Activated CD4-positive, alpha-beta T cell treated with anti-CD3 and anti-CD28 coated beads for 36 hours (primary cell): ENCODE measurements at regions of chrX and their contacts with region 1.

Region 1: DNA sequence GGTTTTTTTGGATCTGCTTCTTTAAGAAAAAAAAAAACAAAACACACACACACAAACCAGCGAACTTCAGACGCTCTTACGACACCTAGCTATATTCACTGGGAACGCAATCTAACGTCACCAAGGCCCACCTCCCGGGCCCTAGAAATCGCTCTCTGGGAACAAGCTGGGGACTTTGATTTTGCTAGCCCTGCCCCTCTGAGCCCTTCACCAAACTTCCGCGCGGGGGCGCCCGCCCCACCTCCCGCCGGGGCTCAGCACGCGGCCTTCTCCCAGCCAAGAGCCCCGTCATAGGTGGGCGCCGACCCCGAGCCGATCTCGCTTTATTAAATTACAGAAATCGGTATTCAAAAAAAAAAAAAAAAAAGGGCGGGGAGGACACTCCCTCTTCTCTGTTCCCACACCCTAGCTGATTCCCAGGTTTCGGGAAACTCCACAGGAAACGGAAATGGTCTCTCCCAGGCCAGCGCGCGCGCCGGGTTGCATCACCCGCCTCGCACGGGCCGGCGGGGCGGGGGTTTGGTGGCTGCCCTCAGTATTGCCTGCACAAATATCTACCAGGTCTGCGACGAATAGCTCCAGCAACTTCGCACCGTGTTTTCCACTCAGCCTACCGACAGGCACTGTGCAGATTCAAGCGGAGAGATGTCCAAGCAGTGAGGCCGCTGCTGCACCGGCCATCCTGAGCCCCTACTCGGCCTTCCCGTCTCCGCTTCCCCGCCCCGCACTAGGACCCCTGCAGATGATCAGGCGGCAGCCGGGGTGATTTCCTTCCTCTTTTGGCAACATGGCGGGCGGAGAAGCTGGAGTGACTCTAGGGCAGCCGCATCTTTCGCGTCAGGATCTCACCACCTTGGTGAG is at the start of gene EIF2S3:
- DNase-seq: peak; percentile 89
- ATAC-seq: peak; percentile 89
- H3K4me3 Mint-ChIP-seq: no peak within 1 kb of the TSS
- H3K27ac Mint-ChIP-seq: no peak within 1 kb of the TSS
- H3K4me1 Mint-ChIP-seq: peaks cover 7% of the 10 kb centered on the region
- H3K27me3 Mint-ChIP-seq: no peaks in the 10 kb centered on the region
- total RNA-seq, gene EIF2S3: 316 to 336 TPM

Region 2: GRCh38 chrX:23742697-23743622 is 311.5 kb before region 1 on chrX and contains the start of gene ACOT9:
- CTCF ChIA-PET with region 1: no interaction called
- POLR2A ChIA-PET with region 1: no interaction called
- intact Hi-C with region 1: loop called in 1 of 2 experiments (anchors 1 kb)
- DNase-seq: peak; percentile 84
- ATAC-seq: peak; percentile 96
- H3K4me3 Mint-ChIP-seq: peak within 1 kb of the TSS; percentile 83
- H3K27ac Mint-ChIP-seq: peak within 1 kb of the TSS; percentile 86
- H3K4me1 Mint-ChIP-seq: peaks cover 24% of the 10 kb centered on the region
- H3K27me3 Mint-ChIP-seq: no peaks in the 10 kb centered on the region
- total RNA-seq, gene ACOT9: 31.7 to 39.9 TPM

Region 3: GRCh38 chrX:23952984-23953907 is 101.2 kb before region 1 on chrX:
- CTCF ChIA-PET with region 1: interaction called, 17 read pairs
- POLR2A ChIA-PET with region 1: interaction called, 4 read pairs
- intact Hi-C with region 1: loop called (anchors 1 kb)
- DNase-seq: peak; percentile 54
- ATAC-seq: peak; percentile 92
- H3K4me3 Mint-ChIP-seq: peak overlapping the region; percentile 69
- H3K27ac Mint-ChIP-seq: peak overlapping the region; percentile 93
- H3K4me1 Mint-ChIP-seq: peaks cover 17% of the 10 kb centered on the region
- H3K27me3 Mint-ChIP-seq: no peaks in the 10 kb centered on the region

Region 4: GRCh38 chrX:24024819-24025740 is 29.3 kb before region 1 on chrX:
- CTCF ChIA-PET with region 1: interaction called, 32 read pairs
- POLR2A ChIA-PET with region 1: interaction called, 31 read pairs
- intact Hi-C with region 1: loop called (anchors 1 kb)
- DNase-seq: peak; percentile 91
- ATAC-seq: peak; percentile 89
- H3K4me3 Mint-ChIP-seq: peak overlapping the region; percentile 83
- H3K27ac Mint-ChIP-seq: peak overlapping the region; percentile 58
- H3K4me1 Mint-ChIP-seq: peaks cover 19% of the 10 kb centered on the region
- H3K27me3 Mint-ChIP-seq: no peaks in the 10 kb centered on the region

Region 5: DNA sequence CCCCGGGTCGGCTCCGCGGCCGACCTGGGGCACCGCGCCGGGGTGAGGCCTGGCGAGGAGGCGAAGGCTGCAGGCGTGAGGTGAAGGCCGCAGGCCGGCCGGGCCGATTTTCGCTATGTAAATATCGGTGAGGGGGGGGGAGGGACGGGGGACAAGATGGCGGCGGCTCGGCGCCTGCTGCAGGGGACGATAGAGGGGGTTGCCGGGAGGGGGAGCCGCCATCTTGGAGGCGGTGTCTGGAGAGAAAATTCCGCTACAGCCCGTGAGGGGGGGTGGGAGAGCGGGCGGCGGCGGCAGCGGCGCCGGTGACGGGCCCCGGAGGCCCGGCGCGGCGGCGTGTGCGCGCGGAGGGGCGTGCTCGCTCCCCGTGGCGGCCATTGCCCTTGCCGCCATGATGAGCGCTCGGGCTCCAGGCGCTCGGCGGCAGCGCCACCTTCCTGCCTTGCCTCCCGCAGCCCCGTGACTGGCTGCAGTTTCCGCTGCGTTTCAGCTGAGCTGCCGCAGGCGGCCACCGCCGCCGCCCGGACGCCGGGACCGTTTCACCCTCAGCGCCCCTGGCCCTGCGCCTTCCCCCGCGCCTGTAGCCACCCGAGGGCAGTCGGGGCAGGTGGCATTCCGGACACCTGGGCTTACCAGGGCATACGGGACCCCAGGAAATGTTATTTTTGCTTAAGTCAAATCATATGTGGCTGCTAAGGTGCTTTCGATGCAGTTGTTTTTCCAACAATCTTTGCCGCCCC is 95.8 kb after region 1 on chrX:
- CTCF ChIA-PET with region 1: interaction called, 3 read pairs
- POLR2A ChIA-PET with region 1: interaction called, 4 read pairs
- intact Hi-C with region 1: loop called (anchors 1 kb)
- DNase-seq: peak; percentile 92
- ATAC-seq: peak; percentile 81
- H3K4me3 Mint-ChIP-seq: peak overlapping the region; percentile 93
- H3K27ac Mint-ChIP-seq: peak overlapping the region; percentile 97
- H3K4me1 Mint-ChIP-seq: peaks cover 50% of the 10 kb centered on the region
- H3K27me3 Mint-ChIP-seq: no peaks in the 10 kb centered on the region

Region 6: GRCh38 chrX:24380262-24381187 is 326.1 kb after region 1 on chrX:
- CTCF ChIA-PET with region 1: no interaction called
- POLR2A ChIA-PET with region 1: no interaction called
- intact Hi-C with region 1: no loop called
- DNase-seq: no peak
- ATAC-seq: no peak
- H3K4me3 Mint-ChIP-seq: no peak overlapping the region
- H3K27ac Mint-ChIP-seq: no peak overlapping the region
- H3K4me1 Mint-ChIP-seq: no peaks in the 10 kb centered on the region
- H3K27me3 Mint-ChIP-seq: no peaks in the 10 kb centered on the region